Vagina (tissue), 2 donors: ENCODE measurements at regions of chr17 and their contacts with region 1.

Region 1: DNA sequence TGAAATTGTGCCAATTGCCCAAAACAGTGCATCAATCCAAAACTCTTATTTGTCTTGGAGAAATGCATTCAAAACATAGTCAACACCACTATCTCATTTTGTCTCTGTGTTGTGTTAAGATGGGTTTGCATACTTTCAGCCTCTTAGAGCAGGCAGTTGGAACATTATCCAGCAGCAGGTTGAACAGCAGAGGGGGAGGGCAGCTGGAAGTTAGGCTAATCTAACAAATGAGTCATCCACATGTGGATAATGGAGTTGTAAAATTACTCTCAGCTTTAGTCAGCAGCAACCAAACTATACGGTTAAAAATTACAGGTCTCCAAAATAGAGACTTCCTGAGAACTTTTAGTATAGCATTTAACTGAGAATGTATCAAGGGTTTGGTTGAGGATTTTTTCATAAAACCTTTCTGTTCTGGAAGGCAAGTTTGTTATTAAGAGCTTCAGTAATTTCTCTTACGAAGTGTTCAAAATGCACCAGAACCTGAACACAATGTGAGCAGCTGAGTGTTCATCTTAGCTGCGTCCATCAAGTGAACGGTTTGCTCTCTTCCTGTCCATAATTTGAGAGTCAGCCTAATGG is 46.3 kb downstream of the PRKCA start:
- DNase-seq: no peak
- H3K4me3 ChIP-seq: no peak overlapping the region
- H3K27ac ChIP-seq: no peak overlapping the region
- H3K4me1 ChIP-seq: peaks cover 16% of the 10 kb centered on the region
- H3K27me3 ChIP-seq: no peaks in the 10 kb centered on the region
- CTCF ChIP-seq: no peak
- POLR2A ChIP-seq: no peak

Region 2: DNA sequence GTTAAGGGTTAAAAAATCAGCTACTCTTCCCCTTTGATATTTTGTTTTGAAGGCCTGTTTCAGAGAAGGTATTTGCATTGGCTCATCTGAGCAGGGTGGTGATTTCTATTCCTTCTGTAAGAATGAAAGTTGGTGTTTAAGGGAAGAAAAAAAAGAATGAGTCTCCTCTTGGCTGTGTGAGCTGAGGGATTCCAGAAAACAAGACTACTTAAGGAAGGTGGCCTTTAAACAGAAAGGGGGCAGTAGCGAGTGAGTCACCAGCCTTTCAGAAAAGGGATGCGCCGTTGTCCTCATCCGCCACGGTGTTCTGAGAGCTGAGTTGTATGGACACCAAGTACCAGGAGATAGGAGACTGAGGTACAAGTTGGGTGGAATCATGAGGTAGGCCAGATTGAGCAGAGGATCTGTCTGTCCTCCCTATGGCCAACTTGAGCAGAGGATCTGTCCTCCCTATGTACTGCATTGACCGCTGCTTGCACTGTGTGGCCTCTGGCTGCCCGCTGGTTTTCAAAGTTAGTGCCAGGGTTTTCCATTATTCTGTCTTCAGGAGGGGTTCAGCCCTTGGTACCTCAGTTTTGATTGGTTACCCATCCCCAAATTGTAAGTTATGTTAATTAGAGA is 38.0 kb before region 1 on chr17:
- intact Hi-C with region 1: no loop called
- DNase-seq: no peak
- H3K4me3 ChIP-seq: no peak overlapping the region
- H3K27ac ChIP-seq: no peak overlapping the region
- H3K4me1 ChIP-seq: peaks cover 9% of the 10 kb centered on the region
- H3K27me3 ChIP-seq: no peaks in the 10 kb centered on the region
- CTCF ChIP-seq: no peak
- POLR2A ChIP-seq: no peak

Region 3: GRCh38 chr17:66330646-66331037 is 18.0 kb before region 1 on chr17:
- intact Hi-C with region 1: loop called (anchors 1 kb)
- DNase-seq: no peak
- H3K4me3 ChIP-seq: peak overlapping the region in 1 of 2 donors; percentile 11
- H3K27ac ChIP-seq: no peak overlapping the region
- H3K4me1 ChIP-seq: peaks cover 4% of the 10 kb centered on the region
- H3K27me3 ChIP-seq: no peaks in the 10 kb centered on the region
- CTCF ChIP-seq: no peak
- POLR2A ChIP-seq: no peak